ENCODE measurements at regions of chr18 and their contacts with region 1.

Region 1: DNA sequence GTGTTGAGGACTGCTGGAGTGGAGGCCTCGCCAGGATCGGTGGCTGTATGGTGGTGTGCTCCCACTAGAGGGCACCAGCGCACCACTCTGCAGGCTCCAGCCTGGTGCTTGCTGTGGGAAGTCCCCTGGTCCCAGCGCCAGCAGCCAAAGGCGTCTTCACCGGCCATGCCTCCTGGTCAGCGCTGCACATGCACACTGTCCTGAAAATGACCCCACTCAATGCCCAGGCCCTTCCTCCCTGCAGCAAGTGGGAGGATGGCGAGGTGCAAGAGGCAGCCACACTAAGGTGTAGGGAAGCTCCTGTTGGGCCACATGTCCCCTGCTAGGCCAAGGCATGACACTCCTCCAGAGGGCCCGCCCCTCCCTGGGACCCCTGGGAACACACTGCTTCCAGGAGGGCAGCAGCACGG is 136.5 kb downstream of the CTIF start:
- DNase-seq: peak; percentile 79 to 97 (median 91)
- ATAC-seq: peak; percentile 98
- H3K4me3 ChIP-seq: no peak overlapping the region
- H3K27ac ChIP-seq: no peak overlapping the region
- H3K4me1 ChIP-seq: peaks cover 3 to 59% of the 10 kb centered on the region in 2 donors
- H3K27me3 ChIP-seq: no peaks in the 10 kb centered on the region
- CTCF ChIP-seq: peak; percentile 90 to 96

Region 2: DNA sequence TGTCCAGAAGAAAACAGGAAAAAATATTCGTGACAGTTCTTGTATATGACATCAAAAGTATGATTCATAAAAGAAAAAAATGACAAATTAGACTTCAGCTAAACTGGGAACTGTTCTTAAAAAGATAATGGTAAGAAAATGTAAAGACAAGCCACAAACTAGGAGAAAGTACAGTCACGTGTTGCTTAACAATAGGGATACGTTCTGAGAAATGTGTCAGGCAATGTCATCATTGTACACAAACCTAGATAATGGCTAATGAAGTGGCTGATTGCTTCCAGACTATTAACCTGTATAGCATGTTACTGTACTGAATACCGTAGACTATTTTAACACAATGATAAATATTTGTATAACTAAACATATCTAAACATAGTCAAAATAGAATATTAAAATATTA is 172.5 kb before region 1 on chr18:
- intact Hi-C with region 1: no loop called
- DNase-seq: no peak
- ATAC-seq: no peak
- H3K4me3 ChIP-seq: no peak overlapping the region
- H3K27ac ChIP-seq: no peak overlapping the region
- H3K4me1 ChIP-seq: no peaks in the 10 kb centered on the region
- H3K27me3 ChIP-seq: no peaks in the 10 kb centered on the region
- CTCF ChIP-seq: no peak

Region 3: DNA sequence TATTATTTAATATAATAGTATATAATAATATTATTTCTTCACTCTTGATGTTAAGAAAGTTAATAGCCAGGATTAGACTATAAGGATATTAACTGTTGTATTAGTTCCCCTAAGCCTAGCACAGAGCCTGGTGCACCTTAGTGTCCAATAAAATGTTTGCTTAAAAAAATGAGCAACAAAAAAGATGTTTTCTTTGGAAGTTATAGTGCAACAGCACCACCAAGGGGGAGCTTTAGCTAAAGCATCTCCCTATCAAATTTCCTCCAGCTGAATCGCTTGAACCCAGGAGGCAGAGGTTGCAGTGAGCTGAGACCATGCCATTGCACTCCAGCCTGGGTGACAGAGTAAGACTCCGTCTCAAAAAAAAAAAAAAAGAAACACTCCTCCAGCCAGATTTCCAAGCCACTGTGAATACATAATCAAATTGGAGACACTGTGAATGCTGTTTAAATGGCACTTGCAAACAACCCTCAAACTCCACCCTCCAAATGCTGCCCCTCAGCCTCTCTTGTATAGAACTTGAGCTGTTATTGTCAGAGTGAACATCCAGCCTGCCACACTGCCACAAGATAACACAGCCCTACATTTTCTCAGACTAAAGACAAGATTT is 563.2 kb after region 1 on chr18:
- intact Hi-C with region 1: loop called in 1 of 2 experiments (anchors 5 kb)
- DNase-seq: no peak
- ATAC-seq: peak; percentile 26
- H3K4me3 ChIP-seq: no peak overlapping the region
- H3K27ac ChIP-seq: no peak overlapping the region
- H3K4me1 ChIP-seq: no peaks in the 10 kb centered on the region
- H3K27me3 ChIP-seq: no peaks in the 10 kb centered on the region
- CTCF ChIP-seq: peak; percentile 30 to 39

Region 4: GRCh38 chr18:49412679-49413078 is 737.3 kb after region 1 on chr18:
- intact Hi-C with region 1: loop called in 1 of 2 experiments (anchors 10 kb)
- DNase-seq: no peak
- ATAC-seq: no peak
- H3K4me3 ChIP-seq: no peak overlapping the region
- H3K27ac ChIP-seq: peak overlapping the region in 1 of 2 donors; percentile 55
- H3K4me1 ChIP-seq: peaks cover 0 to 28% of the 10 kb centered on the region in 2 donors
- H3K27me3 ChIP-seq: no peaks in the 10 kb centered on the region
- CTCF ChIP-seq: no peak

Region 5: GRCh38 chr18:49447810-49448745 is 772.7 kb after region 1 on chr18:
- intact Hi-C with region 1: loop called in 1 of 2 experiments (anchors 10 kb)
- DNase-seq: no peak
- ATAC-seq: peak; percentile 85
- H3K4me3 ChIP-seq: no peak overlapping the region
- H3K27ac ChIP-seq: no peak overlapping the region
- H3K4me1 ChIP-seq: no peaks in the 10 kb centered on the region
- H3K27me3 ChIP-seq: no peaks in the 10 kb centered on the region
- CTCF ChIP-seq: peak; percentile 34 to 61

Measured in left lung (tissue), 14 donors.